HepG2 (cell line): ENCODE measurements at regions of chr22 and their contacts with region 1.

Region 1: GRCh38 chr22:41621099-41621910 is at the start of gene XRCC6:
- DNase-seq: peak; percentile 98
- ATAC-seq: peak; percentile 80
- H3K4me3 ChIP-seq: peak within 1 kb of the TSS; percentile 82 to 94 (median 85)
- H3K27ac ChIP-seq: peak within 1 kb of the TSS; percentile 97
- H3K4me1 ChIP-seq: peaks cover 67% of the 10 kb centered on the region
- H3K27me3 ChIP-seq: no peaks in the 10 kb centered on the region; a peak in 1 of 5 replicates
- CTCF ChIP-seq: peak; percentile 22; the same call in 1 of the 2 replicates
- EP300 ChIP-seq: no peak
- POLR2A ChIP-seq: peak; percentile 88 to 93
- RAD21 ChIP-seq: 0 out of 2 replicates have a peak, but pooled peaks have one; percentile 15
- total RNA-seq, gene XRCC6: 625 and 944 TPM in 2 replicates

Region 2: DNA sequence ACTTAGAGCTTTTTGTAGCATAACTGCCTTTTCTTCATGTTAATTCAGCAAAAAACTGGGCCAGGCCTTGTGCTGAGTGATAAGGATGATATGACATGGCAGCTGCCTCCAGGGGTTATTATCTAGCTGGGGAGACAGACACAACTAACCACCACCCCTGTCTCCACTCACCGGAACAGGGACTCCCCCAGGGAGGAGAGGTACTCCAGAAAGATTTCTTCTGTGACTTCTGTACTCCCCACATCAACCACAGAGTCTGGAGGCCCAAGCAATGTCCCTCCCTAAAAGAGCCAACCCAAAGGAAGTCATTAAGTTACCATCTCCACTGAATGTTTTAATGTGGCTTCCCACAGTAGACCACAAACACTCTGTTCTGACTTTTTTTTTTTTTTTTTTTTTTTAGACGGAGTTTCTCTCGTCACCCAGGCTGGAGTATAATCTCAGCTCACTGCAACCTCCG is 17.4 kb before region 1 on chr22:
- CTCF ChIA-PET with region 1: no interaction called
- POLR2A ChIA-PET with region 1: interaction called, 11 read pairs
- in situ Hi-C with region 1: no loop called
- intact Hi-C with region 1: no loop called
- DNase-seq: no peak
- ATAC-seq: no peak
- H3K4me3 ChIP-seq: no peak overlapping the region
- H3K27ac ChIP-seq: no peak overlapping the region
- H3K4me1 ChIP-seq: no peaks in the 10 kb centered on the region
- H3K27me3 ChIP-seq: no peaks in the 10 kb centered on the region
- CTCF ChIP-seq: no peak
- EP300 ChIP-seq: no peak
- POLR2A ChIP-seq: no peak
- RAD21 ChIP-seq: no peak

Region 3: DNA sequence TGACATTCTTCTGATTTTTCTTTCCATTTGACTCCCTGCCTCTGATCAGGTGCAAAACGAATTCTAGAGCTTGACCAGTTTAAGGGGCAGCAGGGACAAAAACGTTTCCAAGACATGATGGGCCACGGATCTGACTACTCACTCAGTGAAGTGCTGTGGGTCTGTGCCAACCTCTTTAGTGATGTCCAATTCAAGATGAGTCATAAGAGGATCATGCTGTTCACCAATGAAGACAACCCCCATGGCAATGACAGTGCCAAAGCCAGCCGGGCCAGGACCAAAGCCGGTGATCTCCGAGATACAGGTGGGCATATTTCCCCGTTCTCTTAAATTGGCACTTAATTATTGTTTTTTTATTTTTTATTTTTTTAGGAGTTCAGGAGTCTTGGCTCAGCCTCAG is 15.2 kb after region 1 on chr22:
- CTCF ChIA-PET with region 1: no interaction called
- POLR2A ChIA-PET with region 1: interaction called, 15 read pairs
- in situ Hi-C with region 1: no loop called
- intact Hi-C with region 1: no loop called
- DNase-seq: no peak
- ATAC-seq: no peak
- H3K4me3 ChIP-seq: no peak overlapping the region
- H3K27ac ChIP-seq: no peak overlapping the region
- H3K4me1 ChIP-seq: no peaks in the 10 kb centered on the region
- H3K27me3 ChIP-seq: no peaks in the 10 kb centered on the region
- CTCF ChIP-seq: no peak
- EP300 ChIP-seq: no peak
- POLR2A ChIP-seq: no peak
- RAD21 ChIP-seq: no peak

Region 4: GRCh38 chr22:41666661-41667258 is 45.5 kb after region 1 on chr22:
- CTCF ChIA-PET with region 1: no interaction called
- POLR2A ChIA-PET with region 1: interaction called, 11 read pairs
- in situ Hi-C with region 1: no loop called
- intact Hi-C with region 1: no loop called
- DNase-seq: peak; percentile 83
- ATAC-seq: peak; percentile 91
- H3K4me3 ChIP-seq: peak overlapping the region; percentile 30 to 62 (median 39); a peak in 5 of 6 replicates
- H3K27ac ChIP-seq: peak overlapping the region; percentile 78
- H3K4me1 ChIP-seq: peaks cover 16% of the 10 kb centered on the region
- H3K27me3 ChIP-seq: no peaks in the 10 kb centered on the region
- CTCF ChIP-seq: peak; percentile 98
- EP300 ChIP-seq: no peak
- POLR2A ChIP-seq: peak; percentile 68 to 73
- RAD21 ChIP-seq: peak; percentile 87

Region 5: GRCh38 chr22:41848468-41848867 is 227.2 kb after region 1 on chr22:
- CTCF ChIA-PET with region 1: no interaction called
- POLR2A ChIA-PET with region 1: no interaction called
- in situ Hi-C with region 1: no loop called
- intact Hi-C with region 1: no loop called
- DNase-seq: no peak
- ATAC-seq: no peak
- H3K4me3 ChIP-seq: no peak overlapping the region
- H3K27ac ChIP-seq: no peak overlapping the region
- H3K4me1 ChIP-seq: peaks cover 62% of the 10 kb centered on the region
- H3K27me3 ChIP-seq: no peaks in the 10 kb centered on the region
- CTCF ChIP-seq: no peak
- EP300 ChIP-seq: no peak
- POLR2A ChIP-seq: no peak
- RAD21 ChIP-seq: no peak